ENCODE measurements at regions of chr2 and their contacts with region 1.

Region 1: GRCh38 chr2:25878361-25879132 is at the start of gene ASXL2:
- DNase-seq: peak; percentile 97
- H3K4me3 Mint-ChIP-seq: peak within 1 kb of the TSS; percentile 91
- H3K27ac Mint-ChIP-seq: peak within 1 kb of the TSS; percentile 96
- H3K4me1 Mint-ChIP-seq: peaks cover 43% of the 10 kb centered on the region
- H3K27me3 Mint-ChIP-seq: no peaks in the 10 kb centered on the region
- total RNA-seq, gene ASXL2: 25.2 to 29.1 TPM

Region 2: DNA sequence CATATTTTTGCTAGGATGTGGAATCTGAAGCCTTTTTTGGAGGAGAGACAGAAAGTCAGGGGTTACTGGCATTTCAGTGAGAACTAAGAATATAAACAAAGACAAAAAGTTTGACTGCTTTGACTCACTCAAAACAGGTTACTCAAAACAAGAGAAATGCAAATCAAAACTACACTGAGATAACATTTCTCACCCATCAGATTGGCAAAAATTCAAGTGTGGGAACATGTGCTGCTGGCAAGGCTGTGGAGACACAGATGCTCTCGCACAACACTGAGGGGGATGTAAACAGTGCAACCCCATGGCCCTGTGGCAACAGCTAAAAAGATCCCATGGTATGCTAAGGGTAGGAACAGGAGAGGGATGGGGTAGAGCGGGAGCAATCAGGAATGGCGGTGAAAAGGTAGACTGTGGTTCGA is 291.8 kb before region 1 on chr2:
- CTCF ChIA-PET with region 1: no interaction called
- intact Hi-C with region 1: no loop called
- DNase-seq: peak; percentile 60
- H3K4me3 Mint-ChIP-seq: no peak overlapping the region
- H3K27ac Mint-ChIP-seq: peak overlapping the region; percentile 54
- H3K4me1 Mint-ChIP-seq: peaks cover 17% of the 10 kb centered on the region
- H3K27me3 Mint-ChIP-seq: no peaks in the 10 kb centered on the region

Region 3: DNA sequence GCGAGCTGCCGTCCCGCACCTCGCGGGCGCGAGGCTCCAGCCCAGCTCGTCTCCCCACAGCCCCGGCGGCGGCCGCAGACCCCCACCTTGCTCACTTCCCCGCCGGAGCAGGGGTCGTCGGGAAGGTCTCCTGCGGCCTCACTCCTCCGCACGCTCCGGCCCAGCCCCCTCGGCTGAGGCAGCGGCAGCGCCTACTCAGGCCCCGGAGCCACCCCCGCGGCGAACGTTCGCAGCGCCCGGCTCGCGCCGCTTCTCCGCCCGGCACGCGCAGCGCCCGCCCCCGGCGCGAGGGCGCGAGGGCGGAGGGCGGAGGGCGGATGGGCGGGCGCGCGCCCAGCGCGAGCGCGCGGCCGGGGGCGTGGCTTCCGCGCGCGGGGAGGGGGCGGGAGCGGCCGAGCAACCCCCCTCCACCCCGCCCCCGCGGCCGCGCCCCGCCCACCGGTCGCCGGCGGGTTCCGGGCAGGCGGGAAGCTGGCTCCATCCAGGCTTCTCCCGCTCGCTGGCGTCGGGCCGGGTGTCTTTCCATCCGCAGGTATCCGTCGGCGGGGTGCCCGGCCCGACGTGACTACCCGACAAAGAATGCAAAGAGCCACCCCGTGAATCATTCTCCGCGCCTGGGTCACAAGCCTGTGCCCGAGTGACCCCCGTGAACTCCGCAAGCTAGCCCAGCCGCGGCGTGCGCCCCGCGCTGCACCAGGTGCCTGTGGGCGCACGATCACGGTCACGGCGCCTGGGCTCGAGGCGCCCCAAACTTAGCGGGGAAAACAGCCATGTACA is 205.1 kb before region 1 on chr2 and contains the start of gene DTNB:
- CTCF ChIA-PET with region 1: no interaction called
- intact Hi-C with region 1: loop called (anchors 1 kb)
- DNase-seq: peak; percentile 82
- H3K4me3 Mint-ChIP-seq: peak within 1 kb of the TSS; percentile 79
- H3K27ac Mint-ChIP-seq: peak within 1 kb of the TSS; percentile 60
- H3K4me1 Mint-ChIP-seq: peaks cover 25% of the 10 kb centered on the region
- H3K27me3 Mint-ChIP-seq: no peaks in the 10 kb centered on the region
- total RNA-seq, gene DTNB: 27.2 to 27.6 TPM

Region 4: DNA sequence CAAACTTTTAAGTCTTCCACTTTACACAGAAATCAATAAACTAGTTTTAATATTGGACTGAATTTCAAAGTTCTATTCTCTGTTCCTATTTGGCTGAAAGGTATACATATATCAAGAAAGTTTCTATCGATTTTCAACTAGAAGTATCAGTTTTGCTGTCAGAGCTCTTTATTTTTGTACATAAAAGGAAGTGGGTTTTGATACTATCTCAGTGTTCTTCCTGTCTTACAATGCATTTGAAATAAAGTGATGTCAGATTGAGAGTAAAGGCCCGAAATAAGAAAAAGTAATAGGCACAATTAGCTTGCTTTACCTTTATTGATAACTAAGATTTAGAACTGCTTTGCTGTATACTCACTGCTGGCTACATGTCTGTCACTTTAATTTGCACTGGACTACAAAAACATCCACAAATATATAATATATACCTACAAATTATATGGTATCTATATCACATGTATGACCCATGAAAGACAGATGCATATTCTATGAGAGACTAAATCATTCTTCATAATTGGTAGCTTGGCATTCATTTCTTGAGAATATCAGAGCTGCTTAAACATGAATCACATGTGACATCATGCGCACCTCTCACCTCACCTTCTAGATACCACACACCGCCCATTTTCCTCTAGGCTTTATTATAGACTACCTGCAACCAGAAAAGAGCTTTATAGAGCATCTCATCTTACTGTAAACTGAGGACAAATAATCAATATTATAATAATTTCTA is 83.8 kb before region 1 on chr2:
- CTCF ChIA-PET with region 1: no interaction called
- intact Hi-C with region 1: loop called (anchors 1 kb)
- DNase-seq: no peak
- H3K4me3 Mint-ChIP-seq: peak overlapping the region; percentile 49
- H3K27ac Mint-ChIP-seq: peak overlapping the region; percentile 86
- H3K4me1 Mint-ChIP-seq: peaks cover 85% of the 10 kb centered on the region
- H3K27me3 Mint-ChIP-seq: no peaks in the 10 kb centered on the region

Region 5: GRCh38 chr2:25831746-25832449 is 46.6 kb before region 1 on chr2:
- CTCF ChIA-PET with region 1: no interaction called
- intact Hi-C with region 1: loop called (anchors 1 kb)
- DNase-seq: peak; percentile 36
- H3K4me3 Mint-ChIP-seq: peak overlapping the region; percentile 24
- H3K27ac Mint-ChIP-seq: peak overlapping the region; percentile 90
- H3K4me1 Mint-ChIP-seq: peaks cover 61% of the 10 kb centered on the region
- H3K27me3 Mint-ChIP-seq: no peaks in the 10 kb centered on the region

Region 6: DNA sequence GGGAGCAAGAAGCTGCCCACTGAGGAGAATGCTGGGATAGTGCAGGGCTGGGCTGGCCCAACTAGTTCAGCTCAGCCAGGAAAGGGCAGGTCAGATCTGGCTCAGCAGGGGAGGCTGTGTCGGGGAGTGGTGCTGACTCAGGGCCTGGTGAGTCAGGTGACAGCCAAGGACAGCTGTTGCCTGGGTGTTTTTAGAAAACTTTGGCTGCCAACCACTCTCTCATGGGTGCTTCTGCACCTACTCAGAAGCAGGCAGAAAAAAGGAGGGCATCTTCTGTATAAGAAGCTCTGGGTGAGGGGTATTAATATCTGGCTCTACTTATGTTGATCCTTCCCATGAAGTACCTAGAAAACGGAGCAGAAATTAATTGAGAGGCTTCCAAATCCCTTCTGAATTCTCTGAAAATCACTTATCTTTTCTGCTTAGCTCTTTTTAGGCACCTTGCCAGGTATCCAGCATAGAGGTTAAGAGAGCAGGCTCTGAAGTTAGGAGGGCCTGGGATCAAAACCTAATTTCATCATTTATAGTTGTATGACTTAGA is 139.7 kb after region 1 on chr2:
- CTCF ChIA-PET with region 1: no interaction called
- intact Hi-C with region 1: no loop called
- DNase-seq: peak; percentile 57
- H3K4me3 Mint-ChIP-seq: no peak overlapping the region
- H3K27ac Mint-ChIP-seq: no peak overlapping the region
- H3K4me1 Mint-ChIP-seq: no peaks in the 10 kb centered on the region
- H3K27me3 Mint-ChIP-seq: no peaks in the 10 kb centered on the region

Region 7: GRCh38 chr2:26785431-26786206 is 907.1 kb after region 1 on chr2 and contains the start of gene CENPA:
- CTCF ChIA-PET with region 1: no interaction called
- intact Hi-C with region 1: loop called (anchors 5 kb)
- DNase-seq: peak; percentile 98
- H3K4me3 Mint-ChIP-seq: peak within 1 kb of the TSS; percentile 72
- H3K27ac Mint-ChIP-seq: peak within 1 kb of the TSS; percentile 15
- H3K4me1 Mint-ChIP-seq: peaks cover 10% of the 10 kb centered on the region
- H3K27me3 Mint-ChIP-seq: peaks cover 20% of the 10 kb centered on the region
- total RNA-seq, gene CENPA: 42.9 to 43.6 TPM

Measured in activated naive CD4-positive, alpha-beta T cell treated with anti-CD3 and anti-CD28 coated beads for 36 hours (primary cell).